ENCODE measurements at regions of chr22 and their contacts with region 1.

Region 1: GRCh38 chr22:38412435-38413084 is 42.4 kb downstream of the KCNJ4 start:
- DNase-seq: peak in 1 of 2 experiments; percentile 94
- H3K4me3 ChIP-seq: peak overlapping the region in 1 of 4 experiments; percentile 38; a peak in 1 of 8 replicates
- H3K27ac ChIP-seq: no peak overlapping the region
- H3K4me1 ChIP-seq: peaks cover 0 to 15% (median 2%) of the 10 kb centered on the region in 4 experiments; a peak in 4 of 7 replicates
- H3K27me3 ChIP-seq: no peaks in the 10 kb centered on the region
- CTCF ChIP-seq: peak; percentile 64 to 86 (median 74)
- EP300 ChIP-seq: no peak
- POLR2A ChIP-seq: no peak
- RAD21 ChIP-seq: peak; percentile 55 to 73; a peak in 3 of 4 replicates

Region 2: DNA sequence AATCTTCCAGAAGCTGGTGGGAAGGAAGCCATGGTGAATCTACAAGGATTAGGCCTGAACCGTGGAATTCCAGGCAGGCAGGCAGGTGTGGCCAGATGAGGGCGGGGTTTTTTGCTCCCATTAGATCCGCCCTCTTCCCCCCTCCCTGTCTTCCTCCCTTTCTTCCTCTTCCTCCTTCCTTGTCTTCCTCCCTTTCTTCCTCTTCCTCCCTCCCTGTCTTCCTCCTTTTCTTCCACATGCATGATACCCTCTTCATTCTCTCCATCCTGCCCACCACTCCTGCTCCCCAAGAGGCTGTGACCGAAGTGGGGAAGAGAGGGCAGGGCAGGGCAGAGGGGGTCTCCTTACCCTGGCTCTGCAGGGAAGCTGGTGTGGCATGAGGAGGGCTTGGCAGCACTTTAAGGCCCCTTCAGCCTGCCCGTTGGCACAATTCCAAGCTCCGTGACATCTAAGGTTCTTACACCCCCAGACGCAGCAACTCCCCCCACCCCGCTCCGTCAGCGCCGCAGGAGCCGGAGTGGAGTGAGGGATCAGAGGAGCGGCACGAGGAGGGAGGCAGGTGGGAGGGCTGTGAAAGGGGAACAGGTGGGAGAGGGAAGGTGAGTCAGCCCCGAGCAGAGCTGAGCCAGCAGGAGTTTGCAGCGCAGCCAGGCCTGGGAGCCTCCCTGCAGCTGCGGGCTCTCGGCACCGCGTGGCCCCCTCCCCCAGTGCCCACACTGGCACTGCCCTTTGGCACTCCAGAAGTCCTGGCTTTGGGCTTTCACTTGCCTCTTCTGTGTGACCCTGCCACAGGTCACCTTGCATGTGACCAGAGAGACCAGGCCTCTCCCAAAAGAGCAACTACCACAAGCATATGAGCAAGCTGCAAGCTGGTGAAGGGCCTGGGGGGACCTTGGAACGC is 10.3 kb after region 1 on chr22:
- CTCF ChIA-PET with region 1: interaction called, 35 read pairs
- POLR2A ChIA-PET with region 1: interaction called, 7 read pairs
- DNase-seq: no peak
- H3K4me3 ChIP-seq: peak overlapping the region in 1 of 4 experiments; percentile 8; a peak in 1 of 8 replicates
- H3K27ac ChIP-seq: no peak overlapping the region
- H3K4me1 ChIP-seq: peaks cover 3 to 21% (median 11%) of the 10 kb centered on the region in 4 experiments; a peak in 6 of 7 replicates
- H3K27me3 ChIP-seq: no peaks in the 10 kb centered on the region
- CTCF ChIP-seq: no peak
- EP300 ChIP-seq: no peak
- POLR2A ChIP-seq: no peak
- RAD21 ChIP-seq: no peak

Region 3: GRCh38 chr22:38435010-38435409 is 22.4 kb after region 1 on chr22:
- CTCF ChIA-PET with region 1: interaction called, 31 read pairs
- POLR2A ChIA-PET with region 1: no interaction called
- DNase-seq: peak in 1 of 2 experiments; percentile 77
- H3K4me3 ChIP-seq: no peak overlapping the region
- H3K27ac ChIP-seq: no peak overlapping the region
- H3K4me1 ChIP-seq: peaks cover 0 to 2% (median 0%) of the 10 kb centered on the region in 4 experiments; a peak in 4 of 7 replicates
- H3K27me3 ChIP-seq: no peaks in the 10 kb centered on the region
- CTCF ChIP-seq: peak; percentile 67 to 81 (median 74)
- EP300 ChIP-seq: no peak
- POLR2A ChIP-seq: no peak
- RAD21 ChIP-seq: peak; percentile 59 to 67

Region 4: GRCh38 chr22:38452373-38453065 is 40.0 kb after region 1 on chr22:
- CTCF ChIA-PET with region 1: interaction called, 14 read pairs
- POLR2A ChIA-PET with region 1: interaction called, 4 read pairs
- DNase-seq: no peak
- H3K4me3 ChIP-seq: no peak overlapping the region
- H3K27ac ChIP-seq: no peak overlapping the region
- H3K4me1 ChIP-seq: peaks cover 0 to 18% (median 9%) of the 10 kb centered on the region in 4 experiments; a peak in 6 of 7 replicates
- H3K27me3 ChIP-seq: peaks cover 15 to 37% (median 30%) of the 10 kb centered on the region in 4 experiments
- CTCF ChIP-seq: no peak
- EP300 ChIP-seq: no peak
- POLR2A ChIP-seq: no peak
- RAD21 ChIP-seq: no peak

Region 5: GRCh38 chr22:38461414-38462081 is 49.0 kb after region 1 on chr22:
- CTCF ChIA-PET with region 1: interaction called, 13 read pairs
- POLR2A ChIA-PET with region 1: no interaction called
- DNase-seq: peak; percentile 69 to 98
- H3K4me3 ChIP-seq: peak overlapping the region in 2 of 4 experiments; percentile 19 to 49; a peak in 3 of 8 replicates
- H3K27ac ChIP-seq: no peak overlapping the region
- H3K4me1 ChIP-seq: peaks cover 0 to 16% (median 8%) of the 10 kb centered on the region in 4 experiments; a peak in 6 of 7 replicates
- H3K27me3 ChIP-seq: peaks cover 0 to 38% (median 29%) of the 10 kb centered on the region in 4 experiments; a peak in 6 of 7 replicates
- CTCF ChIP-seq: no peak
- EP300 ChIP-seq: peak in 1 of 2 experiments; percentile 84; a peak in 1 of 3 replicates
- POLR2A ChIP-seq: no peak
- RAD21 ChIP-seq: no peak; a peak in 1 of 4 replicates

Region 6: DNA sequence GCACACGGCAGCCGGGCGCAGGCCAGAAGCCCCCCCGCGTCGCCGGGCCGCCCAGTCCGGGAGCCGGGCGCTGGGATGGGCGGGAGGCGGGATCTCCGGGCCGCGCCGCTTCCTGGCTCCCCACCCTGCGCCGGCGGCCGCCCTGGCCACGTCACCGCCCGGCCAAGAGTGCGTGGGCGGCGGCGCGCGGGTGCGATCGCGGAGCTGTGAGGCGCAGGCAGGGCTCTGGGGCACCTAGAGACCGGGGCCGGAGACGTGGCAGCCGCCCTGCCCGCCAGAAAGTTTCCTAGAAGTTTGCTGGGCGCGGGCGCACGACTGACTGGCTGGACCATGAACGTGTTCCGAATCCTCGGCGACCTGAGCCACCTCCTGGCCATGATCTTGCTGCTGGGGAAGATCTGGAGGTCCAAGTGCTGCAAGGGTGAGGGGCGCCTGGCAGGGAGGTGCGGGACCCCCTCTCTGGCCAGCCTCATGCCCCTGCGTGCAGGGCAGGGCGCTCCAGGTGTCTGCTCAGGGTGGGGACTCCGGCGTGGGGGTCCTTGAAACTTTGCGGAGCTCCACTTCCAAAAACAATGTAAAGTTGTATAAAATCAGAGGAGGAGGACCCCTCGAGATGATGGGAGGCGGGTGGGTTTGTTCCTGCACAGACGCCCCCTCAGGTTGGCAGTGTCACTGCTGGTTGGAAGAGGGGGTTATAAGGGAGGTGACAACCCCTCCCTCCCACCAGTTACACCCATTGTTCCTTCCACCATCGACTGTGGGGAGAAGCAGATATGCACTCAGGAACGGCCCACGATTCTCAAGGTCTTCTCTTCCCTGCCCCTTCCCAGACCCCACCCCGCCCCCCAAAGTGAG is 55.6 kb after region 1 on chr22 and contains the start of gene KDELR3:
- CTCF ChIA-PET with region 1: interaction called, 11 read pairs
- POLR2A ChIA-PET with region 1: no interaction called
- DNase-seq: no peak
- H3K4me3 ChIP-seq: peak within 1 kb of the TSS; percentile 44 to 69 (median 62)
- H3K27ac ChIP-seq: no peak within 1 kb of the TSS
- H3K4me1 ChIP-seq: peaks cover 0 to 13% (median 9%) of the 10 kb centered on the region in 4 experiments; a peak in 5 of 7 replicates
- H3K27me3 ChIP-seq: peaks cover 0 to 24% (median 12%) of the 10 kb centered on the region in 4 experiments; a peak in 6 of 7 replicates
- CTCF ChIP-seq: peak; percentile 28 to 60 (median 56); a peak in 3 of 4 replicates
- EP300 ChIP-seq: no peak
- POLR2A ChIP-seq: no peak
- RAD21 ChIP-seq: no peak; a peak in 1 of 4 replicates
- total RNA-seq, gene KDELR3: 7.8 and 7.9 TPM in 2 replicates